ENCODE measurements at regions of chr1 and their contacts with region 1.

Region 1: GRCh38 chr1:214261206-214262123 is 19.5 kb upstream of the SMYD2 start:
- DNase-seq: peak; percentile 71
- H3K4me3 Mint-ChIP-seq: no peak overlapping the region
- H3K27ac Mint-ChIP-seq: no peak overlapping the region
- H3K4me1 Mint-ChIP-seq: peaks cover 28% of the 10 kb centered on the region
- H3K27me3 Mint-ChIP-seq: peaks cover 68% of the 10 kb centered on the region

Region 2: GRCh38 chr1:214213136-214213535 is 48.3 kb before region 1 on chr1:
- intact Hi-C with region 1: loop called (anchors 2 kb)
- DNase-seq: no peak
- H3K4me3 Mint-ChIP-seq: no peak overlapping the region
- H3K27ac Mint-ChIP-seq: no peak overlapping the region
- H3K4me1 Mint-ChIP-seq: peaks cover 3% of the 10 kb centered on the region
- H3K27me3 Mint-ChIP-seq: peaks cover 31% of the 10 kb centered on the region

Region 3: GRCh38 chr1:214281021-214281719 is 19.7 kb after region 1 on chr1 and contains the start of gene SMYD2:
- intact Hi-C with region 1: loop called (anchors 2 kb)
- DNase-seq: peak; percentile 64
- H3K4me3 Mint-ChIP-seq: peak within 1 kb of the TSS; percentile 94
- H3K27ac Mint-ChIP-seq: peak within 1 kb of the TSS; percentile 75
- H3K4me1 Mint-ChIP-seq: peaks cover 32% of the 10 kb centered on the region
- H3K27me3 Mint-ChIP-seq: no peaks in the 10 kb centered on the region
- total RNA-seq, gene SMYD2: 33.6 and 34.5 TPM in 2 replicates

Region 4: GRCh38 chr1:214584805-214585766 is 323.6 kb after region 1 on chr1:
- intact Hi-C with region 1: loop called (anchors 1 kb)
- DNase-seq: no peak
- H3K4me3 Mint-ChIP-seq: no peak overlapping the region
- H3K27ac Mint-ChIP-seq: peak overlapping the region; percentile 70
- H3K4me1 Mint-ChIP-seq: peaks cover 19% of the 10 kb centered on the region
- H3K27me3 Mint-ChIP-seq: no peaks in the 10 kb centered on the region

Region 5: DNA sequence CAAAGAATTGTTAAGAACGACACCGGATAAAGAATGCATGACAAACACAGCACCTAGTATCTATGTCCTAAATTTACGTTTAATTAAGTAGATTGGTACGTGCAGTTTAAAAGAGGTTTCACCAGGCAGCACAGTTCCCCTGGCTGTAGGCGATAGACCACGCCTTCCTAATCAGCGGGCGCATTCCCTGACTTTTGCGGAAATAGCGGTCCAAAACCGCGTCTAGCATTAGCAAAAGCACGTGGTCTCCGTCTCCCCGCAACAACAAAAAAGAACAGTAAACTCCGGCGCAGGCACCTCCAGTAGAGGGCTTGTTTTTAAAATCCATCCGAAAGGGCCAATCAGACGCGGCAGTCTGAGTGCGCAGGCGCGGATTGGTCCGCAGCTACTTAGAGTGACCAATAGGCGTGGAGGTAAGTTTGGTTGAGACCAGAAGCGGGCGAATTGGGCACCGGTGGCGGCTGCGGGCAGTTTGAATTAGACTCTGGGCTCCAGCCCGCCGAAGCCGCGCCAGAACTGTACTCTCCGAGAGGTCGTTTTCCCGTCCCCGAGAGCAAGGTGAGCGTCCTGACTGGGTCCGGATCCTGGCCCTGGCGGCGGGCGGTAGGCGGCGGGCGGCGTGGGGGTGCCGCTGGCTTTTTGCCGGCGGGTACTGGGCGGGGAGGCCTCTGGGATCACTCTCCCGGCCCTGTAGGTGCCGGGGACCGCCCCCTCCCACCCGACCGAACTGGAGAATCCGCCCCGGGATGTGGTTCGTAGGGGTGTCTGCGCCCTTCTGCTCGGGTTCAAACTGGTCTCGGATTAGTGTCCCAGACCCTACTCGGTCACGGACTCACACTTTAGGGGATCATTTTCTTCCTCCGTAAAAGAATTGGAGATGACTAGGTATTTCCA is 341.5 kb after region 1 on chr1 and contains the start of gene CENPF:
- intact Hi-C with region 1: loop called (anchors 5 kb)
- DNase-seq: peak; percentile 95
- H3K4me3 Mint-ChIP-seq: peak within 1 kb of the TSS; percentile 98
- H3K27ac Mint-ChIP-seq: peak within 1 kb of the TSS; percentile 94
- H3K4me1 Mint-ChIP-seq: peaks cover 29% of the 10 kb centered on the region
- H3K27me3 Mint-ChIP-seq: no peaks in the 10 kb centered on the region
- total RNA-seq, gene CENPF: 77.1 and 85.9 TPM in 2 replicates